ENCODE measurements at regions of chr22 and their contacts with region 1.

Region 1: GRCh38 chr22:42662114-42663021 is 13.2 kb upstream of the CYB5R3 start:
- DNase-seq: peak; percentile 83 to 94 (median 88)
- H3K4me3 ChIP-seq: peak overlapping the region; percentile 43
- H3K27ac ChIP-seq: no peak overlapping the region
- H3K4me1 ChIP-seq: no peaks in the 10 kb centered on the region
- H3K27me3 ChIP-seq: no peaks in the 10 kb centered on the region
- CTCF ChIP-seq: peak; percentile 79 to 88 (median 88)
- EP300 ChIP-seq: no peak
- POLR2A ChIP-seq: peak; percentile 15

Region 2: DNA sequence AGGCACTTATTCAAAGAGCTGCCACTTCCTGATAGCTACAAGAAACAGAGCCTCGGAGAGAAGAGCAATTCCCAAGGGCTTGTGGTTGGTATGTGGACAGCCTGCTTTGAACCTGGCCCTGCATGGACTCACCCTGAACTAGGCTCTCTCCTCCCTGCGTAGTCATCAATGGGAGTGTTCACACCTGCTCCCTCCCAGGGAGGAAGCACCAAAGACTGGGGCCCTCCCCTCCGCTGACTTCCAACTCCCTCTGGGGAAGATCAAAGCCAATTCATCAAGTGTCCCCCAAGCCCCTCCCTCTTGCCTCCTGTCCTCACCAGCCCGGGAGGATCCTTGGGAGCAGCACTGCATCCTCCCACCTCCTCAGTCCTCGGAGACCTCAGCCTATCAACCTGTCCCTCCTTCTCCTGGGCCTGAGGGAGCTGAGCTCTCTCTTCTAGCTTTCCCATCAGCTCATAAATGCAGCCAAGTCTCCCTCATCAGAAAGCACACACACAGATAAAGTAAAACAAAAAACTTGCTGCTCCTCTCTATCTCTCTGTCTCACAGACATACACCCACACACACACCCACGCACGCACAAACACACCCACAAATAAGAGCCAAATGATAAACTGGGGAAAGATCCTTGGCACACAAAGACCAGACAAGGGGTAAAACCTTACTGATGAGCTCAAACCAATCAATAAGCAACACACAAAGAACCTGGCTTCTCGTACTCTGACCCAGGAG is 55.0 kb after region 1 on chr22:
- intact Hi-C with region 1: loop called in 1 of 4 experiments (anchors 10 kb)
- DNase-seq: peak in 1 of 5 donors; percentile 25
- H3K4me3 ChIP-seq: no peak overlapping the region
- H3K27ac ChIP-seq: no peak overlapping the region
- H3K4me1 ChIP-seq: peaks cover 5% of the 10 kb centered on the region
- H3K27me3 ChIP-seq: no peaks in the 10 kb centered on the region
- CTCF ChIP-seq: no peak
- EP300 ChIP-seq: no peak
- POLR2A ChIP-seq: no peak

Region 3: DNA sequence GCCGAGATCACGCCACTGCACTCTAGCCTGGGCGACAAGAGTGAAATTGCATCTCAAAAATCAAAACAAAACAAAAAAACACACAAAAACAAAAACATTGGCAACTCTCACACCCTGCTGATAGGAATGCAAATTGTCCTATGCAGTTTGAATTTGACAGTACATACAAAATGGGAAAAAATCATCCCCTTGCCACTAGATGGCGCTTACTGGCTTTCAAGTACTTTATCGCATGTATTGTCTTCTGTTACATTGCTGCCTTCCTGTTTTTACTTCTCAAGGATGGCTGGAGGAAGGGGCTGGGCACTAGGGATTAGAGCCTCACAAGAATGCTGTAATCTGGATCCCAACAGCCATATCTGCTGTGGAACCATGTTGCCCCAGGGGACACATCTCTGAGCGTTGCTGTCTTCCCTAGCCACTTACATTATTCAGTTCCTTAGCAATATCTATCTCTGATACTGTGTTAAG is 117.7 kb after region 1 on chr22:
- intact Hi-C with region 1: loop called in 1 of 4 experiments (anchors 5 kb)
- DNase-seq: peak in 1 of 5 donors; percentile 65
- H3K4me3 ChIP-seq: no peak overlapping the region
- H3K27ac ChIP-seq: no peak overlapping the region
- H3K4me1 ChIP-seq: no peaks in the 10 kb centered on the region
- H3K27me3 ChIP-seq: no peaks in the 10 kb centered on the region
- CTCF ChIP-seq: peak; percentile 74 to 90 (median 78)
- EP300 ChIP-seq: no peak
- POLR2A ChIP-seq: no peak

Region 4: GRCh38 chr22:42819412-42820065 is 157.2 kb after region 1 on chr22:
- intact Hi-C with region 1: loop called in 2 of 4 experiments (anchors 5 kb)
- DNase-seq: no peak
- H3K4me3 ChIP-seq: no peak overlapping the region
- H3K27ac ChIP-seq: no peak overlapping the region
- H3K4me1 ChIP-seq: peaks cover 1% of the 10 kb centered on the region
- H3K27me3 ChIP-seq: no peaks in the 10 kb centered on the region
- CTCF ChIP-seq: no peak
- EP300 ChIP-seq: no peak
- POLR2A ChIP-seq: no peak

Region 5: DNA sequence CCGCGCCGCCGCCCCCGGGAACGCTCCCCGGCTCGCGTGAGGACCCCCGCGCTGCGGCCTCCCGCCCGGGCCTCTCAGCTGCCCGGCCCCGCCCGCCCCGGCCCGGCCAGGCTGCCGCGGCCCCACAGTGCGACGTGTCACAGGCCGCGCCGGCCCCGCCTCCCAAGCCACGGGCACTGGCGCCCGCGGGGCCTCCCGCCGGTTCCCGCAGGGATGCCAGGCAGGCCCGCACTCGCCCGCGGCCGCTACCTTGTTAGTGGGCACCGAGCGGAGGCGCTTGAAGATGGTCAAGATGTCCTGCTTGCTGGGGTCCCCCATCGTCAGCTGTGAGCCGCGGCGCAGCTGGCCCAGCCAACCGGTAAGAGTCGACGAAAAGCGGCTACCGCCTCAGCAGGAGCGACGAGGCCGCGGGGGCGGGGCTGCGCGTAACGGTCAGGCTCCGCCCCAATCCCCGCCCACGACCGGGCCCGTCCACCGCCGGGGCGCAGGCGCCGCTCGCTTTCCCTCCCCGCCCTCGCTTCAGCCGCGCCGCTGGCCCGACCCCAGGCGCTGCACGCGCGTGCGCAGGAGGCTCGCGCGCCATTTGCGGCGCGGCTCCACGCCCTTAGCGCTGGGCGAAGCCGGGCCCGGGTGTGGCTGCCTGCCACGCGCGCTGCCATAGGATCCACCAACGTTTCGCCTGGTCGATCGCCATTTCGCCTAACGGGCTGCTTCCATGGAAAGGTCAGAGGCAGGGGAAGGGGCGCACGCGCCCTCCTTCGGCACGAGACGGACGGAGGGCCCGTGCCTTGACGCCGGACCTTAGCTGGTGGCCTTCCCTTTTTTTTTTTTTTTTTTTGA is 194.7 kb after region 1 on chr22 and contains the start of gene ARFGAP3:
- intact Hi-C with region 1: loop called in 1 of 4 experiments (anchors 10 kb)
- DNase-seq: peak; percentile 92 to 97 (median 95)
- H3K4me3 ChIP-seq: peak within 1 kb of the TSS; percentile 58
- H3K27ac ChIP-seq: peak within 1 kb of the TSS; percentile 85 to 92
- H3K4me1 ChIP-seq: peaks cover 13% of the 10 kb centered on the region
- H3K27me3 ChIP-seq: no peaks in the 10 kb centered on the region
- CTCF ChIP-seq: peak in 1 of 3 donors; percentile 21
- EP300 ChIP-seq: no peak
- POLR2A ChIP-seq: peak; percentile 89
- total RNA-seq, gene ARFGAP3: 28.8 to 47.8 (median 39.2) TPM

Region 6: GRCh38 chr22:43090130-43090789 is 427.9 kb after region 1 on chr22:
- intact Hi-C with region 1: loop called in 1 of 4 experiments (anchors 10 kb)
- DNase-seq: peak in 4 of 5 donors; percentile 38 to 62 (median 54)
- H3K4me3 ChIP-seq: no peak overlapping the region
- H3K27ac ChIP-seq: no peak overlapping the region
- H3K4me1 ChIP-seq: peaks cover 4% of the 10 kb centered on the region
- H3K27me3 ChIP-seq: no peaks in the 10 kb centered on the region
- CTCF ChIP-seq: no peak
- EP300 ChIP-seq: no peak
- POLR2A ChIP-seq: no peak

Measured in ovary (tissue), 10 donors.